Sigmoid colon (tissue), 7 donors: ENCODE measurements at regions of chr19 and their contacts with region 1.

Region 1: GRCh38 chr19:36573020-36573885 is at the start of gene ZNF529:
- DNase-seq: peak; percentile 91
- H3K4me3 ChIP-seq: peak within 1 kb of the TSS; percentile 62 to 93 (median 86)
- H3K27ac ChIP-seq: peak within 1 kb of the TSS; percentile 79 to 89 (median 84)
- H3K4me1 ChIP-seq: peaks cover 0 to 24% (median 18%) of the 10 kb centered on the region in 4 donors
- H3K27me3 ChIP-seq: no peaks in the 10 kb centered on the region
- CTCF ChIP-seq: no peak
- EP300 ChIP-seq: no peak
- POLR2A ChIP-seq: peak; percentile 43 to 54
- total RNA-seq, gene ZNF529: 14.2 to 25.2 (median 20.2) TPM

Region 2: DNA sequence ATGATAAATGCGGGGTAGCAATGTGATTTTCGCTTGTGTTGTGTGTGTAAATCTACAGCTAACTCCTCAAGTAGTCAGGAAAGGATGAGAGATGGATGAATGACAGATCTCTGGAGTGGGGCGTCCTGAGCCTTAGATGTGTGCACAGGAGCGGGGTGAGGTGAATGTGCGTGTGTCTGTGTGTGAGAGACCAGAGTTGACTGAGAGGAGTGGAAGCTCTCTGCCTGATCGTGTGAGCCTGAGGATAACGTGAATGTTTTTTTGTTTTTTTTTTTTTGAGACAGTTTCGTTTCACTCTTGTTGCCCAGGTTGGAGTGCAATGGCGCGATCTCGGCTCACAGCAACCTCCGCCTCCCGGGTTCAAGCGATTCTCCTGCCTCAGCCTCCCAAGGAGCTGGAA is 92.6 kb after region 1 on chr19:
- intact Hi-C with region 1: loop called (anchors 10 kb)
- DNase-seq: no peak
- H3K4me3 ChIP-seq: peak overlapping the region; percentile 66 to 86 (median 76)
- H3K27ac ChIP-seq: no peak overlapping the region
- H3K4me1 ChIP-seq: peaks cover 0 to 21% (median 17%) of the 10 kb centered on the region in 4 donors
- H3K27me3 ChIP-seq: no peaks in the 10 kb centered on the region
- CTCF ChIP-seq: no peak
- EP300 ChIP-seq: no peak
- POLR2A ChIP-seq: no peak

Region 3: GRCh38 chr19:37484406-37485115 is 911.3 kb after region 1 on chr19:
- intact Hi-C with region 1: no loop called
- DNase-seq: no peak
- H3K4me3 ChIP-seq: no peak overlapping the region
- H3K27ac ChIP-seq: no peak overlapping the region
- H3K4me1 ChIP-seq: no peaks in the 10 kb centered on the region
- H3K27me3 ChIP-seq: no peaks in the 10 kb centered on the region
- CTCF ChIP-seq: no peak
- EP300 ChIP-seq: no peak
- POLR2A ChIP-seq: no peak